OCI-LY7 (cell line): ENCODE measurements at regions of chr6 and their contacts with region 1.

Region 1: DNA sequence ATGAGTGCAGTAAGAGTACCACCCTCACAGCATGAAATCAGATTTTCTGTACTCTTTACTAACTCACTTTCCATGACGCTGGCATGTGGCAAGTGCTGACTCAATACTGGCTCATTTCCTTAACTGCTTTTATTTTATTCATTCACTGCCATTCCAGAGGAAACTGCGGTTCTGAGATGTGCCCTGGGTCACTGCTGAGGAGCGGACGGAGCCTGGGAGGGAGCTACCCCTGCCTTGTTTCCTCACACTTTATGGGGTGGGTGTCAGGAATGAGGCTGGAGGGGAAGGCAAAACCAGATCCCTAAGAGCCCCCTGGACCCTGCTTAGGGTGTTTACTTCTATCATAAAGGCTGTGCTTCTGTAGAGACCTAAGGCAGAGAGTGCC is 14.4 kb downstream of the NT5E start:
- DNase-seq: no peak
- H3K4me3 ChIP-seq: no peak overlapping the region
- H3K27ac ChIP-seq: no peak overlapping the region
- H3K4me1 ChIP-seq: peaks cover 21% of the 10 kb centered on the region
- CTCF ChIP-seq: no peak

Region 2: DNA sequence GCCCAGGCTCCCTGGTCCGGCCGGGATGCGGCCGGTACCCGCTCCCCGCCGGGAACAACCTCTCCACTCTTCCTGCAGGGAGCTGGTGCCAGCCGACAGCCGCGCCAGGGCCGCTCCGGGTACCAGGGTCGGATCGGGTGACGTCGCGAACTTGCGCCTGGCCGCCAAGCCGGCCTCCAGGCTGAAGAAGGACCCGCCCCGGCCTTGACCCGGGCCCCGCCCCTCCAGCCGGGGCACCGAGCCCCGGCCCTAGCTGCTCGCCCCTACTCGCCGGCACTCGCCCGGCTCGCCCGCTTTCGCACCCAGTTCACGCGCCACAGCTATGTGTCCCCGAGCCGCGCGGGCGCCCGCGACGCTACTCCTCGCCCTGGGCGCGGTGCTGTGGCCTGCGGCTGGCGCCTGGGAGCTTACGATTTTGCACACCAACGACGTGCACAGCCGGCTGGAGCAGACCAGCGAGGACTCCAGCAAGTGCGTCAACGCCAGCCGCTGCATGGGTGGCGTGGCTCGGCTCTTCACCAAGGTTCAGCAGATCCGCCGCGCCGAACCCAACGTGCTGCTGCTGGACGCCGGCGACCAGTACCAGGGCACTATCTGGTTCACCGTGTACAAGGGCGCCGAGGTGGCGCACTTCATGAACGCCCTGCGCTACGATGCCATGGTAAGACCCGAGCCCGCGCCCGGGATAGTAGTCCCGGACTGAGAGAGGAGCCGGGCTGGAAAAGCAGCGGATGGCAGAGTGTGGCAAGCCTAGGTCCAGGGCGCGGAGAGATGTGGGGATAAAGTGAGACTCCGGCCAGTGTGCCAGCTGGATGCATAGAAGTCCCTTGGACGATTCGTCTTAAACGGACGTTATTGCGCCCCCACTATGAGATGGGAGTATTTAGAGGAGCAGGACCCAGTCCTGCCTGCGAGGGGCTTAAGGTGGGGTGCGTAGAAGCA is 14.2 kb before region 1 on chr6 and contains the start of gene NT5E:
- CTCF ChIA-PET with region 1: no interaction called
- POLR2A ChIA-PET with region 1: interaction called, 13 read pairs
- intact Hi-C with region 1: no loop called
- DNase-seq: no peak
- H3K4me3 ChIP-seq: no peak within 1 kb of the TSS
- H3K27ac ChIP-seq: no peak within 1 kb of the TSS
- H3K4me1 ChIP-seq: no peaks in the 10 kb centered on the region
- CTCF ChIP-seq: no peak
- total RNA-seq, gene NT5E: not detected in 2 replicates

Region 3: DNA sequence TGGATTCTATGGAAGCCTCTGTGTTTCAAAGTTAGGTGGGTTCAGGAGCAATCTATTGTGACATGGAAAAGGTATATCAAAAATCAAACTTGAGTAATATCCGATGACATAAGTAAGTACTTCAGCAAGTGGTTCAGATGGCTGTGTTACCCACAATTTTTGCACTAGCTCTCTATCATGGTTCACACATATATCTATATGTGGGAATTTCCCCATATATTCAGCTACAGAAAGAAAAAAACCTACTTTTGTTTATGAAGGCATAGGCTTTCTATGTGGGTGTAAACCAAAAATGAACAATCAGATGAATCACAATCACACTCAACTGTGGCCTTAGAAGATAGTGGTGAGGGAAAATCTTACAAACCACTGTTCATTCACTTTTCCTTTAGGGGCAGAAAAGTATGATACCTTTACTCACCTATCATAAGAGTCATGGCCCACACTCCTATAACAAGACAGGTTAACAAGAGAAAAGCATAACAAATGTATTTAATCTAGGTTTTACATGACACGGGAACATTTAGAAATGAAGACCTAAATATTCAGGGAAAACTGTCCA is 1023.5 kb after region 1 on chr6:
- CTCF ChIA-PET with region 1: no interaction called
- POLR2A ChIA-PET with region 1: no interaction called
- intact Hi-C with region 1: no loop called
- DNase-seq: no peak
- H3K4me3 ChIP-seq: no peak overlapping the region
- H3K27ac ChIP-seq: no peak overlapping the region
- H3K4me1 ChIP-seq: no peaks in the 10 kb centered on the region
- CTCF ChIP-seq: no peak